Naive thymus-derived CD8-positive, alpha-beta T cell (primary cell): ENCODE measurements at regions of chr10 and their contacts with region 1.

Region 1: GRCh38 chr10:62816331-62817120 is at the start of gene EGR2:
- DNase-seq: peak; percentile 81 to 100 (median 97)
- ATAC-seq: peak; percentile 82 to 83
- H3K4me3 Mint-ChIP-seq: peak within 1 kb of the TSS; percentile 92 to 100 (median 96)
- H3K27ac Mint-ChIP-seq: peak within 1 kb of the TSS; percentile 89 to 98 (median 94)
- H3K4me1 Mint-ChIP-seq: peaks cover 30 to 68% (median 49%) of the 10 kb centered on the region in 4 donors
- H3K27me3 Mint-ChIP-seq: peaks cover 19 to 39% (median 25%) of the 10 kb centered on the region in 5 donors
- polyA plus RNA-seq, gene EGR2: 0.07 to 0.28 (median 0.10) TPM

Region 2: DNA sequence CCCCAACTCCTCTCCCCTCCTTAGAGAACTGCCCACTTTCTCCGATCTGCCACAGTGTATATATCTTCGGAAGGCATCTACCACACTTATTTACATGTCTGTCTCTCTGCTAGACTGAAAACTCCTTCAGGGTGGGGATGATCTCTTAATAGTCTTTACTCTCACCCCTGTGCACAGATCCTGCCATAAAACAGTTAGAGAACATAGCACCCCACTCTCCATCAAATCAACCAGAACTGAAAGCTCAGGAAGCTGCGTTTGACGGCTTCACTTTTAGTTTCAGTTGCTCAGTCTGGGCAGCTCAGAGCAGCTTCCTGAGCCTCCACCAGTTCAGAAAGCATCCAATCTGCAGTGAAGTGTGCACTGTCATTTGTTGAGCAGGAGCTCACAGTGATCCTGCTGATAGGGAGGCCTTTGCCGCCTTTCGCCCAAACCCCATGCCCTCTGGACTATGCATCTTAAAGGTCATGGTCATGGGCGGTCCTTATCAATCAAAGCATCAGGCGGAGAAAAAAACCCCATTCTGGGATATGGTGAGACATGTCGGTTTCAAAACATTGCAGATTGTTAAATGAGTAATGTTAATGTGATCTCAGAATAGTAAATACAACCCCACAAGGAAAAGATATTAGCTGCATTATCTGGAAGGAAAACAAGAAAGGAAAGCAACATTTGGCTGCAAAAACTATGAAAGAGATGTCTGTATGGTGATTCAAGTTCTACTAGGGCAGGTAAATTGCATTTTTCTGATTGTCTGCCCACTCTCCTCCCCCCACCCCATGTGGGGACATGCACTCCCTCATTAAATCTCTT is 179.1 kb before region 1 on chr10:
- POLR2A ChIA-PET with region 1: interaction called, 31 read pairs
- DNase-seq: peak; percentile 8 to 81 (median 64)
- ATAC-seq: peak; percentile 92 to 93
- H3K4me3 Mint-ChIP-seq: no peak overlapping the region
- H3K27ac Mint-ChIP-seq: no peak overlapping the region
- H3K4me1 Mint-ChIP-seq: peaks cover 2 to 11% (median 6%) of the 10 kb centered on the region in 4 donors
- H3K27me3 Mint-ChIP-seq: no peaks in the 10 kb centered on the region

Region 3: GRCh38 chr10:62732841-62733653 is 83.5 kb before region 1 on chr10:
- POLR2A ChIA-PET with region 1: interaction called, 19 read pairs
- DNase-seq: peak; percentile 21 to 87 (median 62)
- ATAC-seq: peak; percentile 90 to 92
- H3K4me3 Mint-ChIP-seq: peak overlapping the region in 6 of 10 donors; percentile 16 to 74 (median 52)
- H3K27ac Mint-ChIP-seq: peak overlapping the region in 3 of 10 donors; percentile 80 to 93 (median 81)
- H3K4me1 Mint-ChIP-seq: peaks cover 0 to 12% (median 6%) of the 10 kb centered on the region in 4 donors
- H3K27me3 Mint-ChIP-seq: peaks cover 2 to 33% (median 4%) of the 10 kb centered on the region in 5 donors

Region 4: GRCh38 chr10:62779487-62780248 is 36.9 kb before region 1 on chr10:
- POLR2A ChIA-PET with region 1: interaction called, 13 read pairs
- DNase-seq: peak; percentile 58 to 95 (median 84)
- ATAC-seq: peak; percentile 99
- H3K4me3 Mint-ChIP-seq: peak overlapping the region in 9 of 10 donors; percentile 2 to 61 (median 23)
- H3K27ac Mint-ChIP-seq: peak overlapping the region in 8 of 10 donors; percentile 22 to 86 (median 38)
- H3K4me1 Mint-ChIP-seq: peaks cover 8 to 27% (median 19%) of the 10 kb centered on the region in 4 donors
- H3K27me3 Mint-ChIP-seq: peaks cover 0 to 8% (median 0%) of the 10 kb centered on the region in 5 donors

Region 5: DNA sequence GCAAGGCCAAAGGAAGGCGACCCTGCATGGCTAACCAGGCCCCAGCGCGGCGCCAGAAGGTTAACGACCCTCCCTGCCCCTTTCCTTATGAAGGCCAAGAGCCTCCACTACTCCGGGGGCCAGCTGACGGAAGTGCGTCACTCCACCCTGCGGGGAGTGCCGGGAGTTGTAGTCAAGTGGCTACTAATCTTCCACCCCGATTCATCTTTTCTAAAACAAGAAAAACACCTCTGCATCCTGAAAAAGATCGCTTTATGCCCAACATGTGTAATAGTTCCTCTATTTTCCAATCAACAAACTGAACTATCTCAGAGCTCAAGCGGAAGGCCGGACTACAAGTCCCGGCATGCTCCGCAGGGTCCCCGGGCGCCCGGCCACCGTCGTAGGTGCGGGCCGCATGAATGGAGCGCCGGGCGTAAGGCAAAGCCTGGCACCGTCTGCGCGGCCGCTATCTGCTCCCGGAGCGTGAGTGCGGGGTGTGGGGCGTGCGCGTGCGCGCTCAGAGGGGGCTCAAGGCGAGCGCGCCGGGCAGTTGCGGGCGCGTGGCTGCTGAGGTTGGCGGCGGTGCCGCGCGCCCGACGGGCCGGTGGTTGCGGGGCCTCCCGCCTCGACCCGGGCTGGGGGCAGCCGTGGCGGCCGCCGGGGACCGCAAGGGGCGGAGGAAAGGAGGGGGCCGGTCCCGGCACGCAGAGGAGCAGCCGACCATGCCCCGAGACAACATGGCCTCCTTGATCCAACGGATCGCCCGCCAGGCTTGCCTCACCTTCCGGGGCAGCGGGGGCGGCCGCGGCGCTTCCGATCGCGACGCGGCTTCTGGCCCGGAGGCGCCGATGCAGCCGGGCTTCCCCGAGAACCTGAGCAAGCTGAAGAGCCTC is 11.9 kb before region 1 on chr10 and contains the start of gene ADO:
- POLR2A ChIA-PET with region 1: interaction called, 87 read pairs
- DNase-seq: peak; percentile 63 to 89 (median 78)
- ATAC-seq: peak; percentile 87 to 92
- H3K4me3 Mint-ChIP-seq: peak within 1 kb of the TSS; percentile 91 to 99 (median 96)
- H3K27ac Mint-ChIP-seq: peak within 1 kb of the TSS; percentile 96 to 100 (median 98)
- H3K4me1 Mint-ChIP-seq: peaks cover 17 to 43% (median 41%) of the 10 kb centered on the region in 4 donors
- H3K27me3 Mint-ChIP-seq: peaks cover 0 to 4% (median 0%) of the 10 kb centered on the region in 5 donors
- polyA plus RNA-seq, gene ADO: 1.7 to 3.2 (median 3.2) TPM

Region 6: GRCh38 chr10:63133056-63133820 is 316.7 kb after region 1 on chr10 and contains the start of gene NRBF2:
- POLR2A ChIA-PET with region 1: interaction called, 18 read pairs
- DNase-seq: peak; percentile 93 to 98 (median 97)
- ATAC-seq: peak; percentile 90 to 94
- H3K4me3 Mint-ChIP-seq: peak within 1 kb of the TSS; percentile 87 to 97 (median 92)
- H3K27ac Mint-ChIP-seq: peak within 1 kb of the TSS; percentile 90 to 99 (median 96)
- H3K4me1 Mint-ChIP-seq: peaks cover 13 to 47% (median 40%) of the 10 kb centered on the region in 4 donors
- H3K27me3 Mint-ChIP-seq: peaks cover 1 to 8% (median 5%) of the 10 kb centered on the region in 5 donors
- polyA plus RNA-seq, gene NRBF2: 14.7 to 21.3 (median 16.7) TPM